A549 (cell line): ENCODE measurements at regions of chr10 and their contacts with region 1.

Region 1: DNA sequence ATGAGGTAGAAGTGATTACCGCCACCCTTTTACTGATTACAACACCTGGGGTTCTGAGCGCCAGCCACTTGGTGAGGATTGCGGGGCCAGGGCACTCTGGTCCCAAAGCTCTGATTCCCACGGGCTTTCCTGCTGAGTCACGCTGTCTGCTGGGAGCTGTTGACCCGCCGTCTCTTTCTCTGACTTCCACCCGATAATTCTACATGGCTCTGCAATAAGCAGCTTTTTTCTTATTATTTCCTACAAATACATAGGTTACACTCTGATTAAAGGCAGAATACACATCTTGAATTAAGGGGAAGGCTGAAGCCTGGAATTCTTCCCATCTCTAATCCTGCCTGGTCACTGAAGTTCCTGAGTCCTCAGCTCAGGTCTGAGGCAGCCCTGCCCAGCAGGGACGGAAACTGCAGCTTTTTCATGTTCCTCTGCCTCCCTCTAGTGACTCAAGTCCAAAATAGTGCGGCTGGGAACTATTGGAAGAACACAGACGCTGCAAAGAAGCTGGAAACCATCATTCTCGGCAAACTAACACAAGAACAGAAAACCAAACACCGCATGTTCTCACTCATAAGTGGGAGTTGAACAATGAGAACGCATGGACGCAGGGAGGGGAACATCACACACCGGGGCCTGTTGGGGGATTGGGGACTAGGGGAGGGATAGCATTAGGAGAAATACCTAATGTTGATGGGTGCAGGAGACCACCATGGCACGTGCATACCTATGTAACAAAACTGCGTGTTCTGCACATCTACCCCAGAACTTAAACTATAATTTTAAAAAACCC is 178.3 kb downstream of the PRKCQ start:
- DNase-seq: peak; percentile 96 to 97
- ATAC-seq: peak; percentile 90
- H3K4me3 ChIP-seq: peak overlapping the region; percentile 25; the same call in 1 of the 3 replicates
- H3K27ac ChIP-seq: peak overlapping the region; percentile 91 to 96
- H3K4me1 ChIP-seq: peaks cover 72% of the 10 kb centered on the region
- CTCF ChIP-seq: peak; percentile 89
- EP300 ChIP-seq: peak; percentile 43 to 66; a peak in 2 of 5 replicates
- POLR2A ChIP-seq: no peak
- RAD21 ChIP-seq: peak; percentile 99

Region 2: GRCh38 chr10:6088721-6089390 is 312.9 kb before region 1 on chr10 and contains the start of gene RBM17:
- CTCF ChIA-PET with region 1: interaction called, 20 read pairs
- POLR2A ChIA-PET with region 1: interaction called, 5 read pairs
- DNase-seq: peak; percentile 72 to 97
- ATAC-seq: peak; percentile 85 to 88
- H3K4me3 ChIP-seq: peak within 1 kb of the TSS; percentile 94
- H3K27ac ChIP-seq: peak within 1 kb of the TSS; percentile 95 to 97
- H3K4me1 ChIP-seq: peaks cover 35% of the 10 kb centered on the region
- CTCF ChIP-seq: peak; percentile 100
- EP300 ChIP-seq: no peak; a peak in 1 of 5 replicates
- POLR2A ChIP-seq: peak; percentile 59
- RAD21 ChIP-seq: peak; percentile 64 to 74
- polyA plus RNA-seq, gene RBM17: 68.0 and 75.2 TPM in 2 replicates

Region 3: GRCh38 chr10:6151087-6151977 is 250.4 kb before region 1 on chr10:
- CTCF ChIA-PET with region 1: interaction called, 21 read pairs
- POLR2A ChIA-PET with region 1: interaction called, 4 read pairs
- DNase-seq: peak; percentile 60 to 66
- ATAC-seq: peak; percentile 89 to 94
- H3K4me3 ChIP-seq: no peak overlapping the region
- H3K27ac ChIP-seq: no peak overlapping the region
- H3K4me1 ChIP-seq: no peaks in the 10 kb centered on the region
- CTCF ChIP-seq: peak; percentile 65
- EP300 ChIP-seq: no peak
- POLR2A ChIP-seq: no peak
- RAD21 ChIP-seq: peak; percentile 25 to 47; a peak in 3 of 5 replicates

Region 4: GRCh38 chr10:6202684-6203330 is 198.9 kb before region 1 on chr10 and contains the start of gene PFKFB3:
- CTCF ChIA-PET with region 1: interaction called, 332 read pairs
- POLR2A ChIA-PET with region 1: interaction called, 367 read pairs
- DNase-seq: peak; percentile 91 to 97
- ATAC-seq: peak; percentile 71 to 78
- H3K4me3 ChIP-seq: peak within 1 kb of the TSS; percentile 70
- H3K27ac ChIP-seq: peak within 1 kb of the TSS; percentile 85 to 97
- H3K4me1 ChIP-seq: peaks cover 10% of the 10 kb centered on the region; the same call in 2 of the 3 replicates
- CTCF ChIP-seq: peak; percentile 92
- EP300 ChIP-seq: peak in 1 of 2 experiments; percentile 41; a peak in 1 of 5 replicates
- POLR2A ChIP-seq: peak; percentile 100
- RAD21 ChIP-seq: peak; percentile 77 to 96
- polyA plus RNA-seq, gene PFKFB3: 139 and 151 TPM in 2 replicates

Region 5: DNA sequence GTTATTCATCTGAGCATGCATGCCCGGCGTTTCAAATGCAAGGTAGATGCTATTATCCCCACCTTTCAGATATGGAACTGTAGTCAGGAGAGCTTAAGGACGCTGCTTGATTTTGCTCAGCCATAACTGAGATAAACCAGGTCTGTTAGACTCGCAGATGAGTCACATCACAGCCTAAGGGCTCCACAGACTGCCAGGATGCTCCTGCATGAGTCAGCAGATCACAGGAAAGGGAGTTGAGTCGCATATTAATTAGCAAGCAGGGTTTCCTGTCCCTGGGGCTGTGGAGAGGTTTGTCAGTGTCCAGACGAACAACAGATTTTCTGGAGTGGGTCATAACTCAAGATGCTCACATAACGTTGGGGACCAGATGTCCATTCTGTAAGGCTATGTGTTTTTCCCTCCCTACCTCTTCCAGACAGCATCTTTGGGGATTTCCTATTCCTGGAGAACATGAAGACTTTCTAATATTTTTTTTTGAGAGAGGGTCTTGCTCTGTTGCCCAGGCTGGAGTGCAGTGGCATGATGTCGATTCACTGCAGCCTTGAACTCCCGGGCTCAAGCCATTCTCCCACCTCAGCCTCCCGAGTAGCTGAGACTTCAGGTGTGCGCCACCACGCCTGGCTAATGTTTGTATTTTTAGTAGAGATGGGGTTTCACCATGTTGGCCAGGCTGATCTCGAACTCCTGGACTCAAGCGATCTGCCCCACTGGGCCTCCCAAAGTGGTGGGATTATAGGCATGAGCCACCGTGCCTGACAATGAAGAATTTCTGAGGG is 162.4 kb before region 1 on chr10:
- CTCF ChIA-PET with region 1: interaction called, 23 read pairs
- POLR2A ChIA-PET with region 1: interaction called, 9 read pairs
- DNase-seq: peak; percentile 98
- ATAC-seq: peak; percentile 80 to 96
- H3K4me3 ChIP-seq: no peak overlapping the region
- H3K27ac ChIP-seq: peak overlapping the region; percentile 75 to 86
- H3K4me1 ChIP-seq: peaks cover 61% of the 10 kb centered on the region
- CTCF ChIP-seq: no peak
- EP300 ChIP-seq: peak; percentile 24 to 64; a peak in 2 of 5 replicates
- POLR2A ChIP-seq: no peak
- RAD21 ChIP-seq: peak in 1 of 2 experiments; percentile 53; a peak in 3 of 5 replicates

Region 6: GRCh38 chr10:6314620-6315205 is 87.0 kb before region 1 on chr10:
- CTCF ChIA-PET with region 1: interaction called, 16 read pairs
- POLR2A ChIA-PET with region 1: interaction called, 3 read pairs
- DNase-seq: peak; percentile 36 to 85
- ATAC-seq: peak; percentile 70 to 90
- H3K4me3 ChIP-seq: no peak overlapping the region
- H3K27ac ChIP-seq: peak overlapping the region; percentile 80 to 86
- H3K4me1 ChIP-seq: peaks cover 41% of the 10 kb centered on the region
- CTCF ChIP-seq: no peak
- EP300 ChIP-seq: no peak
- POLR2A ChIP-seq: no peak
- RAD21 ChIP-seq: no peak; a peak in 1 of 5 replicates

Region 7: GRCh38 chr10:6416892-6417512 is 15.2 kb after region 1 on chr10:
- CTCF ChIA-PET with region 1: interaction called, 22 read pairs
- POLR2A ChIA-PET with region 1: no interaction called
- DNase-seq: peak; percentile 71 to 75
- ATAC-seq: peak; percentile 86 to 95
- H3K4me3 ChIP-seq: no peak overlapping the region
- H3K27ac ChIP-seq: no peak overlapping the region
- H3K4me1 ChIP-seq: no peaks in the 10 kb centered on the region
- CTCF ChIP-seq: peak; percentile 88
- EP300 ChIP-seq: no peak
- POLR2A ChIP-seq: no peak
- RAD21 ChIP-seq: peak; percentile 88 to 94

Region 8: GRCh38 chr10:6464862-6465430 is 63.2 kb after region 1 on chr10:
- CTCF ChIA-PET with region 1: no interaction called
- POLR2A ChIA-PET with region 1: no interaction called
- DNase-seq: no peak
- ATAC-seq: no peak
- H3K4me3 ChIP-seq: no peak overlapping the region
- H3K27ac ChIP-seq: no peak overlapping the region
- H3K4me1 ChIP-seq: no peaks in the 10 kb centered on the region
- CTCF ChIP-seq: no peak
- EP300 ChIP-seq: no peak
- POLR2A ChIP-seq: no peak
- RAD21 ChIP-seq: no peak